ENCODE measurements at regions of chr7 and their contacts with region 1.

Region 1: DNA sequence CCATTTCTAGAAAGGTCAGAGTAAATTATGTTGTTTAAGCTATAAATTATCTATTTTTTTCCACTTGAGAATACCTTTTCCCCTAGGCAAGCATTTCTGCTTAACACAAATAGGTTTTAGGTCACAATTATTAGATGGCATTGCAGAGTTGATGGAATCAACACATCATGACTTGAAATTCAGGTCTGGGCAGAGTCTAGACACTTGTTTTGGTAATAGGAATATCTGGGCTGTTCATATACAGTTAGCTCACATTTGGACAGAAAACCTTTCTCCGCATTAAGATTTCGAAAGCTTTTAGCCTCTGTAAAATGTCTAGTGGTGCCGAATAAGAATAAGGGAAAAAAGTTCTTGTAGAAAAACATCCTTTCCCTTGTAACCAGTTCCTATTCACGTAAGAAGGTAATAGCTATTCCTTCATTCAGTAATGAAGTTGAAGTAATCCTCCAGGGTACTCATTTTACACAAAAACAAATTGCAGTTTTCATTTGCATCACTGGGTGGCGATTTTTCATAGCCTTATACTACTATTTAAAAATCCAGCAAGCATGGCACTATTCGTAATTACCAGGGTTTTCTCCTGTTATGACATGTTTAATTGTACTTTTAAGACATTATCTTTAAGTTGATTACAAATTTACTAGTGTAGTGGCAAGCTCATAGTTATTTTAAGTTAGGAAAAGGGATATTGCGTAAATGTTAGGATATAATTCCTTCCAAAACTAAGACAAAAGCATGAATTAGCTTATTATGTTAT is 37.0 kb downstream of the RPA3 start:
- DNase-seq: peak; percentile 52
- ATAC-seq: peak; percentile 81
- H3K4me3 Mint-ChIP-seq: no peak overlapping the region
- H3K27ac Mint-ChIP-seq: peak overlapping the region; percentile 37
- H3K4me1 Mint-ChIP-seq: peaks cover 27% of the 10 kb centered on the region
- H3K27me3 Mint-ChIP-seq: no peaks in the 10 kb centered on the region

Region 2: GRCh38 chr7:7595451-7595850 is 85.9 kb before region 1 on chr7:
- CTCF ChIA-PET with region 1: interaction called, 14 read pairs
- POLR2A ChIA-PET with region 1: no interaction called
- intact Hi-C with region 1: no loop called
- DNase-seq: no peak
- ATAC-seq: no peak
- H3K4me3 Mint-ChIP-seq: no peak overlapping the region
- H3K27ac Mint-ChIP-seq: no peak overlapping the region
- H3K4me1 Mint-ChIP-seq: no peaks in the 10 kb centered on the region
- H3K27me3 Mint-ChIP-seq: no peaks in the 10 kb centered on the region

Region 3: DNA sequence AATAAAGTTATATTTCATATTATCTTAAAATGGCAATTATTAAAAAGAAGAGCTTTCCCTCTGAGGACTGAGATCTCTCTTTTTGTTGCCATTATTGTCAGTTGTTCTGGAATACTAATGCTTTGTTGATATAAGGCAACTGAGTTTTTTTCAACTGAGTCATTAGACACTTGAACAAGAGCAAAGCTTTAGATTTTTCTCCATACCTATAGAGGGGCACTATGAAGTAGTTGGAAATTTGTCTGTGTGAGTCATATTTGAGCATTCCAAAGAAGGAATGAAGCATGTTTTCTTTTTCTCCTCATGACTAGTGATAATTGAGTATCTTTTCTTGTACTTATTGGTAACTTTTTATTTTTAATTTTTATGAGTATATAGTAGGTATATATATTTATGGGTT is 12.5 kb after region 1 on chr7:
- CTCF ChIA-PET with region 1: interaction called, 46 read pairs
- POLR2A ChIA-PET with region 1: no interaction called
- intact Hi-C with region 1: no loop called
- DNase-seq: no peak
- ATAC-seq: no peak
- H3K4me3 Mint-ChIP-seq: no peak overlapping the region
- H3K27ac Mint-ChIP-seq: no peak overlapping the region
- H3K4me1 Mint-ChIP-seq: peaks cover 10% of the 10 kb centered on the region
- H3K27me3 Mint-ChIP-seq: no peaks in the 10 kb centered on the region

Region 4: GRCh38 chr7:7761340-7761980 is 80.1 kb after region 1 on chr7:
- CTCF ChIA-PET with region 1: interaction called, 25 read pairs
- POLR2A ChIA-PET with region 1: no interaction called
- intact Hi-C with region 1: loop called (anchors 1 kb)
- DNase-seq: no peak
- ATAC-seq: peak; percentile 34
- H3K4me3 Mint-ChIP-seq: peak overlapping the region; percentile 74
- H3K27ac Mint-ChIP-seq: peak overlapping the region; percentile 87
- H3K4me1 Mint-ChIP-seq: peaks cover 41% of the 10 kb centered on the region
- H3K27me3 Mint-ChIP-seq: no peaks in the 10 kb centered on the region

Region 5: DNA sequence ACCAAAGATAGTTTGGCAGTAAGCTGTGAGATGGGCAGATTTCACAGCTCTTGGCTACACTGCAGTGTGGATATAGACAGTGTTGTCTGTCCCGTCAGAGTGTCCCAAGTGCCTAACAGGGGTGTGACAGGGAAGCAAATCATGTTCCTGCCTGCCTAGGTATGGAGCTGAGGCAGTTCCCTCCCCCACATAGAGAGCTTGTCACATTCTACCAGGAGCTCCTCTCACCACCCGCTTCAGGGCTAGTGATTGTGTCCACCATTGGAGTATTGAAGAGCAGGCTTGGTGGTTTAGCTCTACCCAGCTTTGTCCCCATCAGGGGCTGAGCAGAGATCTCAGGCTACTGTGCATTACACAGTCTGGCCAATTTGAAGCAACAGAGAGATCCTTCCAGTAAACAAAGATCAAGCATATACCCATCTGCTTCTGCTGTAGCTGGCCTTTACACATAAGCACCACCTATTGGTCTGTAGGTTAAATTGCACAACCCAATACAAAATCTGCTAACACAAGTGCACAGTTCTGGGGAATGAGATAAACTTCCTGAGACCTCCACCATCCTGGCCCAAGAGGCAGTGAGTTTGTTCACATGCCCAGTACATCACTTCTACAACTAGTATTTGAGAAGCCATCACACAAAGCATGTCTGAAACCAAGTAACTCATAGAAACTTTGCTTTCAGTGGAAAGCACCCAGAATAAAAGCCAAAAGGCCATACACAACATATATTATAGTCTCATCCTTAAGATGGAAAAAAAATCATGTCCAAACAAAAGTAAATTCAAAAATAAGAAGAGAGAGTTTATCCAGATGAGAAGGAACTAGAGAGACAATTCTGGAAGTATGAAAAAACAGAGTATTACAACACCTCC is 354.5 kb after region 1 on chr7:
- CTCF ChIA-PET with region 1: interaction called, 10 read pairs
- POLR2A ChIA-PET with region 1: no interaction called
- intact Hi-C with region 1: loop called in 1 of 2 experiments (anchors 2 kb)
- DNase-seq: no peak
- ATAC-seq: peak; percentile 68
- H3K4me3 Mint-ChIP-seq: no peak overlapping the region
- H3K27ac Mint-ChIP-seq: no peak overlapping the region
- H3K4me1 Mint-ChIP-seq: peaks cover 23% of the 10 kb centered on the region
- H3K27me3 Mint-ChIP-seq: no peaks in the 10 kb centered on the region

Region 6: GRCh38 chr7:8190119-8190895 is 508.9 kb after region 1 on chr7:
- CTCF ChIA-PET with region 1: interaction called, 46 read pairs
- POLR2A ChIA-PET with region 1: no interaction called
- intact Hi-C with region 1: loop called (anchors 1 kb)
- DNase-seq: peak; percentile 73
- ATAC-seq: peak; percentile 86
- H3K4me3 Mint-ChIP-seq: no peak overlapping the region
- H3K27ac Mint-ChIP-seq: no peak overlapping the region
- H3K4me1 Mint-ChIP-seq: peaks cover 8% of the 10 kb centered on the region
- H3K27me3 Mint-ChIP-seq: no peaks in the 10 kb centered on the region

Region 7: DNA sequence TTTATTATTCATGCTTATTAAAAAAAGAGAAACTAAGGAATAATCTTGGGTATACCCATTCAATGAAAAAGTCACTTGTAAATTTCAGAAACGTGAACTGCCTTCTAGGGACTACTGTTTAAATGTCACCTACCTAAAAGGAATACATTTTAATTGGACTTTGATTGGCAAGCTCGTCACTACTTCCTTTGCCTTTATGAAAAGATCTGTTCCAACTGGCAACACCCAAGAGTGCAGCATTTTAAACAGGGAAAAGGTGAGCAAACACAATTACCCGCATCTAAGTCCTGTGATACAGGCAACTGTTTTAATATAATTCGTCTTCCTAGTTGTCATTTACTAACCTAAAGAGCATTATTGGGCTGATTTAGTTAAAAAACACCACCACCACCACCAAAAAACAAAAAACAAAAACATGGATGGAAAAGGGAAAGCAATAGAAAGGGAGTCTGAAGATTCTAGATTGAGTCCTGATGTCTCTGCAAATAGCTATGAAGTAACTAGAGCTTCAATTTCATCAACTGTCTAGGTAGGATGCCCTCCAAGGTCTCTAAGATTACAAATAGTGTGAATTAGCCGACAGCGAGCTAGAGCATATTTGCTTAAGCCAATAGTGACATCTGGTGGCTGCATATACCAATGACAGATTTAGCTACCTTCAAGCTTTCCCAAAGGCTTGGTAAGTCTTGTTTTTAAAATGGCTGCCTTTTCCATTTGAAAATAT is 614.4 kb after region 1 on chr7:
- CTCF ChIA-PET with region 1: interaction called, 6 read pairs
- POLR2A ChIA-PET with region 1: no interaction called
- intact Hi-C with region 1: loop called in 1 of 2 experiments (anchors 2 kb)
- DNase-seq: peak; percentile 25
- ATAC-seq: peak; percentile 80
- H3K4me3 Mint-ChIP-seq: no peak overlapping the region
- H3K27ac Mint-ChIP-seq: no peak overlapping the region
- H3K4me1 Mint-ChIP-seq: peaks cover 2% of the 10 kb centered on the region
- H3K27me3 Mint-ChIP-seq: peaks cover 10% of the 10 kb centered on the region

Measured in activated CD4-positive, alpha-beta T cell treated with anti-CD3 and anti-CD28 coated beads for 36 hours (primary cell).